ENCODE measurements at regions of chr1 and their contacts with region 1.

Region 1: DNA sequence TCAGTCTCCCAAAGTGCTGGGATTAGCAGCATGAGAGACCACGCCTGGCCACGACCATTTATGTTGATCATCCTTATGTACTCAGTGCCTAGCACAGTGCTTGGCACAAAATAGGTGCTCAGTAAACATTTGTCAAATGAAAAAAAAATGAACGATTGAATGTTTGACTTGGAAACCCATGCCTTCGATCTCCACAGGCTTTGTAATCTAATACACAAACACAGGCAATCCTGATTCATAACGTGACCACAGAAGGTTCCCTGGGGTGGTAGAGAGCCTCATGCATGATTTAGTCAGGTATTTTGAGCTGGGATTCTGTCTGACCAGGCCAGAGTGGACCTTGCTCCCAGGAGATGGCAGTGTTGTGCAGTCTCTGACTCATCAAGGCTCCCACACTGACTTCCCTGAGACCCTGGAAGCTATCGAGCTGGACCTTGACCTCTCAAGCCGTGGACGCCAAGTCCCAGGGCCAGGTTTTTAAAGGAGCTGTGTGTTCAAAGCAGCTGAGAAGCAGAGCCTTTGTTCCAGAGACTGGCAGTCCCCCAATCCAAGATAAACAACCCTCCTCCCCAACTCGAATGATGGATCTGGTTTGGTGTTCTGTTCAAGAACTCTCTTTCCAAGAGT is 81.1 kb downstream of the PGM1 start:
- H3K4me3 ChIP-seq: no peak overlapping the region
- H3K27ac ChIP-seq: no peak overlapping the region
- H3K4me1 ChIP-seq: no peaks in the 10 kb centered on the region; the same call in 1 of the 2 replicates
- CTCF ChIP-seq: peak; percentile 55; the same call in 1 of the 2 replicates

Region 2: GRCh38 chr1:63662056-63662836 is 12.1 kb before region 1 on chr1:
- CTCF ChIA-PET with region 1: interaction called, 11 read pairs
- POLR2A ChIA-PET with region 1: no interaction called
- H3K4me3 ChIP-seq: no peak overlapping the region
- H3K27ac ChIP-seq: no peak overlapping the region
- H3K4me1 ChIP-seq: no peaks in the 10 kb centered on the region
- CTCF ChIP-seq: no peak

Region 3: GRCh38 chr1:63701187-63701586 is 26.8 kb after region 1 on chr1:
- CTCF ChIA-PET with region 1: no interaction called
- POLR2A ChIA-PET with region 1: no interaction called
- H3K4me3 ChIP-seq: no peak overlapping the region
- H3K27ac ChIP-seq: no peak overlapping the region
- H3K4me1 ChIP-seq: no peaks in the 10 kb centered on the region; the same call in 1 of the 2 replicates
- CTCF ChIP-seq: no peak

Measured in HEK293 (cell line).